ENCODE measurements at regions of chr11 and their contacts with region 1.

Region 1: DNA sequence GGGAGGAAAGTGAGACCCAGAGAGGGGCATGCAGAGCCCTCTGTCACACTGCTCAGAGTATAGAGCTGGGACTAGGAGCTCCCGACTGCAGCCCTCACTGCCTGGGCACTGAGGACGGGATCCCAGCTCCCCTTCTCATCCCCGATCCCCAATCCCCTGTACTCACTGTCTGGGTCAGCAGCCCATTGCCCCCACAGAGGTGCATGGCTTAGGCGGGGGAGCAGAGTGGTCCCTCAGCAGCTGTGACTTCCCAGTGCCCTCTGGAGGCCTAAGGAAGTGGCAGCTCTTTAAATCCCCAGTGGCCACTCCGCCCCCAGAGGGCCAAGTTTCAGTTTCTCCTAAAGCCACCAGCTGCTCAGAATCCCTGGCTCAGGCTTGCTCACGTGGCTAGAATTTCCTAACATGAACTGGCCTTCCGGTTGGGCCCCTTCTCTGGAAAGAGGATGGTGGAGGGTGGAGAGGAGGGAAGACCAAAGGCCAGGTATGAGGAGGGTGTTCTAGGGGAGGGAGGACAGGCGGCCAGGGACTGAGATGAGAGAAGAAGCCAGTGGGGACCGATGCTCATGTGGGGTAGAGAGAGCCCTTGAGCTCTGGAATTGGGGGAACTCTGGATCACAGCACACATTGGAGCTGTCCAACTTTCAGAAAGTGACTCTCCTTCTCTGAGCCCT is at the start of gene BATF2:
- DNase-seq: peak; percentile 86 to 91 (median 88)
- ATAC-seq: peak; percentile 91
- H3K4me3 ChIP-seq: peak within 1 kb of the TSS; percentile 33
- H3K27ac ChIP-seq: peak within 1 kb of the TSS; percentile 52
- H3K4me1 ChIP-seq: peaks cover 23% of the 10 kb centered on the region in 2 experiments; a peak in 4 of 5 replicates
- H3K27me3 ChIP-seq: no peaks in the 10 kb centered on the region
- CTCF ChIP-seq: peak; percentile 80 to 97 (median 97)
- EP300 ChIP-seq: peak; percentile 12; the same call in 1 of the 2 replicates
- POLR2A ChIP-seq: peak; percentile 62
- RAD21 ChIP-seq: peak; percentile 88
- polyA plus RNA-seq, gene BATF2: 1.7 to 1.9 TPM

Region 2: GRCh38 chr11:64787526-64788320 is 209.1 kb before region 1 on chr11:
- CTCF ChIA-PET with region 1: no interaction called
- POLR2A ChIA-PET with region 1: interaction called, 3 read pairs
- in situ Hi-C with region 1: no loop called
- intact Hi-C with region 1: loop called (anchors 1 kb)
- DNase-seq: peak; percentile 71 to 85 (median 77)
- ATAC-seq: peak; percentile 98
- H3K4me3 ChIP-seq: no peak overlapping the region
- H3K27ac ChIP-seq: no peak overlapping the region
- H3K4me1 ChIP-seq: peaks cover 3 to 17% of the 10 kb centered on the region in 2 experiments; a peak in 4 of 5 replicates
- H3K27me3 ChIP-seq: no peaks in the 10 kb centered on the region
- CTCF ChIP-seq: peak; percentile 85 to 92 (median 91)
- EP300 ChIP-seq: no peak
- POLR2A ChIP-seq: no peak
- RAD21 ChIP-seq: peak; percentile 60 to 80

Region 3: GRCh38 chr11:64916775-64917662 is 79.8 kb before region 1 on chr11 and contains the start of gene ATG2A:
- CTCF ChIA-PET with region 1: no interaction called
- POLR2A ChIA-PET with region 1: no interaction called
- in situ Hi-C with region 1: no loop called
- intact Hi-C with region 1: loop called (anchors 1 kb)
- DNase-seq: peak; percentile 93 to 99 (median 95)
- ATAC-seq: peak; percentile 96
- H3K4me3 ChIP-seq: peak within 1 kb of the TSS; percentile 87
- H3K27ac ChIP-seq: peak within 1 kb of the TSS; percentile 87
- H3K4me1 ChIP-seq: peaks cover 20 to 47% of the 10 kb centered on the region in 2 experiments; a peak in 4 of 5 replicates
- H3K27me3 ChIP-seq: no peaks in the 10 kb centered on the region
- CTCF ChIP-seq: no peak
- EP300 ChIP-seq: no peak
- POLR2A ChIP-seq: peak; percentile 86
- RAD21 ChIP-seq: no peak
- polyA plus RNA-seq, gene ATG2A: 0.25 to 0.53 TPM

Region 4: GRCh38 chr11:64924102-64924851 is 72.6 kb before region 1 on chr11 and contains the start of gene PPP2R5B:
- CTCF ChIA-PET with region 1: no interaction called
- POLR2A ChIA-PET with region 1: interaction called, 3 read pairs
- in situ Hi-C with region 1: no loop called
- intact Hi-C with region 1: loop called (anchors 2 kb)
- DNase-seq: peak; percentile 94 to 95 (median 95)
- ATAC-seq: peak; percentile 98
- H3K4me3 ChIP-seq: peak within 1 kb of the TSS; percentile 60
- H3K27ac ChIP-seq: peak within 1 kb of the TSS; percentile 94
- H3K4me1 ChIP-seq: peaks cover 14 to 41% of the 10 kb centered on the region in 2 experiments; a peak in 4 of 5 replicates
- H3K27me3 ChIP-seq: no peaks in the 10 kb centered on the region
- CTCF ChIP-seq: peak in 1 of 3 experiments; percentile 17; a peak in 1 of 6 replicates
- EP300 ChIP-seq: peak; percentile 46
- POLR2A ChIP-seq: peak; percentile 53
- RAD21 ChIP-seq: no peak
- polyA plus RNA-seq, gene PPP2R5B: 0.10 to 0.13 TPM

Region 5: GRCh38 chr11:64947208-64947814 is 49.5 kb before region 1 on chr11:
- CTCF ChIA-PET with region 1: no interaction called
- POLR2A ChIA-PET with region 1: interaction called, 4 read pairs
- in situ Hi-C with region 1: no loop called
- intact Hi-C with region 1: loop called (anchors 2 kb)
- DNase-seq: peak in 3 of 4 experiments; percentile 33 to 51 (median 33)
- ATAC-seq: peak; percentile 96
- H3K4me3 ChIP-seq: no peak overlapping the region
- H3K27ac ChIP-seq: no peak overlapping the region
- H3K4me1 ChIP-seq: peaks cover 0 to 3% of the 10 kb centered on the region in 2 experiments; a peak in 2 of 5 replicates
- H3K27me3 ChIP-seq: no peaks in the 10 kb centered on the region
- CTCF ChIP-seq: peak; percentile 23 to 42 (median 39); a peak in 3 of 6 replicates
- EP300 ChIP-seq: no peak
- POLR2A ChIP-seq: no peak
- RAD21 ChIP-seq: peak in 1 of 2 experiments; percentile 42; a peak in 2 of 4 replicates